ENCODE measurements at regions of chr5 and their contacts with region 1.

Region 1: DNA sequence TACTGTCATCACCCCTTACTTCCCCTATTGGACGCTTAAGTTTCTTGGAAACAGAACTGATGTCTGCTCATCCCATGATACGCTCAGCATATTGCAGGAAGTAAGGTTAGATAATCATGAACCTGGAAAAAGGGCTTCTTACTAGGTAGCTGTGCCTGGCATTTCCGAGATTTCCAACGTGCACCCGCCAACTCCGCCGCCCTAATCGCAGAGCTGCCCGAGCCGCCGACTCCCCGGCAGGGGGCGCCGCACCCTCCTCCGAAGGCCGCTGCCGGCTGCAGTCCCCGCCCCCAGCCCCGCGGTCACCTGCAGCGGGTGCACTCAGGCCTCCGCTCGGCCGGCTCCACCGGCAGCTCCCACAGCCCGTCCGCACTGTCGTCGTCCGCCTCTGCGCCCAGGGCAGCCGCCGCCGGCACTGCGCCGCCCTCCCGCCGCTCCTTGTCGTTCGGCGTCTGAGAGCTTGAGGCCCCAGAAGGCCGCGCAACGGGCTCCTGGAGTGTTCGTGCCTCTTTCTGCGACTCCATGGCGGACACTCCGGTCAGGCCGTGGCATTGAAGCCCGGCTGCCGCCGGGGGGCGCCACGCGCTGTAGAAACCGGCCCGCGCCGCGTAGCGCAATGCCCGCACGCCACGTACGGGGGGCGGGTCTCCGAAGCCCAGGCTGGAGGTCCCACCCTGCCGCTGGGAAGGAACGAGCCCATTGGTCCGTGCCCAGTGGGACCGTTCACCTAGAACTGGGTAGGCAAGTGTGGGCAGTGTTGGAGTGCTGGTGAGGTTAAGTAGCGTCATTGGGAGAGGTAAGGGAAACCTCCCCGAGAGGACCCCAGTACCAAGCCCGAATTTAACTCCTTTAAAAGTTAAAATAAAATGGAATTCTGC is at the start of gene DTWD2:
- DNase-seq: peak; percentile 87 to 98 (median 91)
- H3K4me3 ChIP-seq: peak within 1 kb of the TSS; percentile 67
- H3K4me3 Mint-ChIP-seq: peak within 1 kb of the TSS; percentile 82 to 92 (median 85)
- H3K27ac ChIP-seq: peak within 1 kb of the TSS; percentile 76
- H3K27ac Mint-ChIP-seq: peak within 1 kb of the TSS; percentile 22 to 88 (median 73)
- H3K4me1 ChIP-seq: peaks cover 11% of the 10 kb centered on the region
- H3K4me1 Mint-ChIP-seq: peaks cover 16 to 21% (median 19%) of the 10 kb centered on the region in 3 donors
- H3K27me3 ChIP-seq: no peaks in the 10 kb centered on the region
- H3K27me3 Mint-ChIP-seq: no peaks in the 10 kb centered on the region
- total RNA-seq, gene DTWD2: 3.3 to 3.7 TPM

Region 2: DNA sequence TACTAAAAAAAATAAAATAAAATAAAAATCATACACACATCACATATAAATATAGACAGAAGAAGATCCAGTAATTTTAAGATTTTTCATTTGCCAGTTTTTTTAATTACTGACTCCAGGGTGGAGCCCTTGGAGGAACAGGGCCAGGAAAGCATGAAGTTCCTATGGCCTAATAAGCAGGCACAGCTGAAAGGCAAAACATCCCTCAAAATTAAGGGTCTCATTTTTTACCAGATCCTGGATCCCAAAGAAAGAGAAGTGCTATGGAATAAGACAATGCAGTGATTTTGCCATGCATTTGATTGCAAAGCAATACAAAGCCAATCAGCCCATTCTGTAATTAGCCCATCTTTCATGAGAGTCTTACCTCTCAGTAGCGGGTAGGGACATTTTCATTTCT is 11.5 kb after region 1 on chr5:
- CTCF ChIA-PET with region 1: interaction called, 30 read pairs
- POLR2A ChIA-PET with region 1: no interaction called
- DNase-seq: no peak
- H3K4me3 ChIP-seq: no peak overlapping the region
- H3K4me3 Mint-ChIP-seq: no peak overlapping the region
- H3K27ac ChIP-seq: no peak overlapping the region
- H3K27ac Mint-ChIP-seq: no peak overlapping the region
- H3K4me1 ChIP-seq: no peaks in the 10 kb centered on the region
- H3K4me1 Mint-ChIP-seq: no peaks in the 10 kb centered on the region
- H3K27me3 ChIP-seq: no peaks in the 10 kb centered on the region
- H3K27me3 Mint-ChIP-seq: peaks cover 9 to 31% of the 10 kb centered on the region in 2 donors

Region 3: DNA sequence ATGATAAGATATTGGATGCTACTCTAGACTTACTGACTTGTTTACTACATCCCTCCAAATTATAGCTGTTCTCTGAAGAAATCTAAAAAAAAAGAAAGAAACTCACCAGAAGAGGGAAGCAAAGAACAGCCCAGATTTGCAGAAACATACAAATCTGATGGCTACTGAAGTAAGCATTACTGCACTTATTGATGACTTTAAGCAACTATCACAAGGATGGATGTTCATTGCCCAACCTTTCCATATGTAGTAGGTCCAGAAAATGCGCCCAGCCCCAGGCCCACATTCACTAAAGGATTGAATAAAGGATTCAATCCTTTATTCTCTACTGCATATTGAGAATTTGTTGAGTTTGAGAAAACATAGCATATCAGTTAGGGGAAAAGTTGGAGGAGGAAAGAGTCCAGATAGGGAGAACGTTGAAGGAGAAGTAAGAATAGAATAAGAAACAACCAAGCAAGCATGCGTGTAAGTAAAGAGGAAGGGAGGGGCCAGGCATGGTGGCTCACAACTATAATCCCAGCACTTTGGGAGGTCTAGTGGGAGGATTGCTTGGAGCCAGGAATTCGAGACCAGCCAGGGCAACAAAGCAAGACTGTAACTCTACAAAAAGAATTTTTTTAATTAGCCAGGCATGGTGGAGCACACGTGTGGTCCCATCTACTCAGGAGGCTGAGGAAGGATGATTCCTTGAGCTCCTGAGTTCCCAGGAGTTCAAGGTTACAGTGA is 34.0 kb after region 1 on chr5:
- CTCF ChIA-PET with region 1: interaction called, 12 read pairs
- POLR2A ChIA-PET with region 1: no interaction called
- DNase-seq: peak in 2 of 5 donors; percentile 20 to 33
- H3K4me3 ChIP-seq: no peak overlapping the region
- H3K4me3 Mint-ChIP-seq: no peak overlapping the region
- H3K27ac ChIP-seq: no peak overlapping the region
- H3K27ac Mint-ChIP-seq: peak overlapping the region in 1 of 8 donors; percentile 48
- H3K4me1 ChIP-seq: no peaks in the 10 kb centered on the region
- H3K4me1 Mint-ChIP-seq: no peaks in the 10 kb centered on the region
- H3K27me3 ChIP-seq: no peaks in the 10 kb centered on the region
- H3K27me3 Mint-ChIP-seq: no peaks in the 10 kb centered on the region

Region 4: GRCh38 chr5:119070828-119071572 is 82.8 kb after region 1 on chr5 and contains the start of gene DMXL1:
- CTCF ChIA-PET with region 1: interaction called, 20 read pairs
- POLR2A ChIA-PET with region 1: no interaction called
- DNase-seq: peak; percentile 96 to 99 (median 98)
- H3K4me3 ChIP-seq: peak within 1 kb of the TSS; percentile 68
- H3K4me3 Mint-ChIP-seq: peak within 1 kb of the TSS; percentile 91 to 100 (median 99)
- H3K27ac ChIP-seq: peak within 1 kb of the TSS; percentile 86
- H3K27ac Mint-ChIP-seq: peak within 1 kb of the TSS; percentile 92 to 100 (median 98)
- H3K4me1 ChIP-seq: peaks cover 31% of the 10 kb centered on the region
- H3K4me1 Mint-ChIP-seq: peaks cover 31 to 50% (median 50%) of the 10 kb centered on the region in 3 donors
- H3K27me3 ChIP-seq: no peaks in the 10 kb centered on the region
- H3K27me3 Mint-ChIP-seq: peaks cover 0 to 3% of the 10 kb centered on the region in 2 donors
- total RNA-seq, gene DMXL1: 25.9 to 26.2 TPM

Region 5: GRCh38 chr5:119118000-119118399 is 129.8 kb after region 1 on chr5:
- CTCF ChIA-PET with region 1: no interaction called
- POLR2A ChIA-PET with region 1: no interaction called
- DNase-seq: no peak
- H3K4me3 ChIP-seq: no peak overlapping the region
- H3K4me3 Mint-ChIP-seq: no peak overlapping the region
- H3K27ac ChIP-seq: no peak overlapping the region
- H3K27ac Mint-ChIP-seq: peak overlapping the region in 3 of 8 donors; percentile 44 to 66 (median 64)
- H3K4me1 ChIP-seq: no peaks in the 10 kb centered on the region
- H3K4me1 Mint-ChIP-seq: no peaks in the 10 kb centered on the region
- H3K27me3 ChIP-seq: no peaks in the 10 kb centered on the region
- H3K27me3 Mint-ChIP-seq: no peaks in the 10 kb centered on the region

Region 6: GRCh38 chr5:119435436-119436132 is 447.4 kb after region 1 on chr5:
- CTCF ChIA-PET with region 1: interaction called, 41 read pairs
- POLR2A ChIA-PET with region 1: no interaction called
- DNase-seq: peak; percentile 52 to 82 (median 60)
- H3K4me3 ChIP-seq: no peak overlapping the region
- H3K4me3 Mint-ChIP-seq: no peak overlapping the region
- H3K27ac ChIP-seq: no peak overlapping the region
- H3K27ac Mint-ChIP-seq: peak overlapping the region in 1 of 8 donors; percentile 76
- H3K4me1 ChIP-seq: no peaks in the 10 kb centered on the region
- H3K4me1 Mint-ChIP-seq: peaks cover 3 to 13% (median 11%) of the 10 kb centered on the region in 3 donors
- H3K27me3 ChIP-seq: no peaks in the 10 kb centered on the region
- H3K27me3 Mint-ChIP-seq: peaks cover 30 to 54% of the 10 kb centered on the region in 2 donors